ENCODE measurements at regions of chr3 and their contacts with region 1.

Region 1: DNA sequence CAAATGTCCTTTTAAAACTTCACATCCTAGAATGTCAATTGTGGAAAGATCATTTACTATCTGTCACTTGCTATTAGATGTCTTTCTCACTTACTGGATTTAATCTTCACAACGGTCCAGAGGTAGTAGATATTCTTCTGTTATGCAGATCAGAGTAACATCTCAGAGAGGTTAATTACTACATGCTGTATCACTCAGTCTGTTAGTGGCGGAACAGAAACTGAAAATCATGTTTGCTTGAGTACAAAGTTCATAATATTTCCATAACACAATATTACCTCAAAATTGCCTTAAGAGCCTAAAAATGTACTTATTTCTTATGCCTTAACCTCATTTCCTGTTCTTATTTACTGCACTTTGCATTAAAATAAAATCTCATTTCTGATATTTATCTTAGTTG is 28.6 kb upstream of the GPR149 start:
- DNase-seq: no peak
- H3K4me3 ChIP-seq: no peak overlapping the region
- H3K27ac ChIP-seq: no peak overlapping the region
- H3K4me1 ChIP-seq: no peaks in the 10 kb centered on the region
- H3K27me3 ChIP-seq: no peaks in the 10 kb centered on the region
- CTCF ChIP-seq: no peak
- POLR2A ChIP-seq: no peak

Region 2: GRCh38 chr3:155880286-155880685 is 1421.7 kb after region 1 on chr3:
- intact Hi-C with region 1: loop called (anchors 10 kb)
- DNase-seq: no peak
- H3K4me3 ChIP-seq: no peak overlapping the region
- H3K27ac ChIP-seq: no peak overlapping the region
- H3K4me1 ChIP-seq: no peaks in the 10 kb centered on the region
- H3K27me3 ChIP-seq: no peaks in the 10 kb centered on the region
- CTCF ChIP-seq: no peak
- POLR2A ChIP-seq: no peak

Region 3: DNA sequence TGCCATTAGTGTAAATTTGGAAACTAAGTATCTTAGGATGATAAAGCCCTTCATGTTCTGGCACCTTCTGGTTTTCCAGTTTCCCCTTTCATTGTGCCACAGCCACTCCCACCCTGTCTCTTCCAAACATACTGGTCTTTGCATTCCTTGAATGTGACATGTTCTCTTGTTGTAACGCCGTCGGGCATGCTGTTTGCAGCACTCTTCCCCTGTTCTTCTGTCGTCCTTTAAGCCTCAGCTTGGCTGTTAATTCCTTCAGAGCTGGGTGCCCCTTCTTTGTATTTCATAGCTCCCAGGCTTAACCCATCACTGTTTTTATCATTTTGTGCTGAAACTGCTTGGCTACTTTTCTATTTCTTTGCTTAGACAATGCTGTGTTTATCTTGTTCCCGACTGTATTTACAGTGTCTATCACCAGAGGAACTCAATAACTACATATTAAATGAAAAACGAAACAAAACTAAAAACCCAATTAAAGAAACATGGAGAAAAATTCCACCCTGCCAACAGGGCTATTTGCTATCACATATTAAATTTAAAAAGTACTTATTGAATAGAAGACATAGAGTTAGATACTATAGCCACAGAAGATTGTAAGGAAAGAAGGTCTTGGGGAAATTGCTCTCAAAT is 1566.5 kb after region 1 on chr3:
- intact Hi-C with region 1: no loop called
- DNase-seq: no peak
- H3K4me3 ChIP-seq: peak overlapping the region in 2 of 3 donors; percentile 24 to 40
- H3K27ac ChIP-seq: no peak overlapping the region
- H3K4me1 ChIP-seq: no peaks in the 10 kb centered on the region
- H3K27me3 ChIP-seq: no peaks in the 10 kb centered on the region
- CTCF ChIP-seq: no peak
- POLR2A ChIP-seq: no peak

Measured in breast epithelium (tissue), 4 donors.